ENCODE measurements at regions of chr17 and their contacts with region 1.

Region 1: GRCh38 chr17:3913531-3914311 is 2.5 kb downstream of the P2RX1 start:
- DNase-seq: peak; percentile 58 to 95
- H3K4me3 ChIP-seq: no peak overlapping the region
- H3K27ac ChIP-seq: no peak overlapping the region
- H3K4me1 ChIP-seq: peaks cover 0 to 1% (median 0%) of the 10 kb centered on the region in 4 experiments; a peak in 1 of 7 replicates
- H3K27me3 ChIP-seq: no peaks in the 10 kb centered on the region
- CTCF ChIP-seq: peak; percentile 97 to 99 (median 99)
- EP300 ChIP-seq: no peak
- POLR2A ChIP-seq: no peak
- RAD21 ChIP-seq: peak; percentile 93 to 94

Region 2: GRCh38 chr17:3845621-3846441 is 67.9 kb before region 1 on chr17 and contains the start of gene NCBP3:
- CTCF ChIA-PET with region 1: interaction called, 75 read pairs
- POLR2A ChIA-PET with region 1: no interaction called
- DNase-seq: peak; percentile 77 to 91
- H3K4me3 ChIP-seq: peak within 1 kb of the TSS; percentile 84 to 95 (median 90)
- H3K27ac ChIP-seq: peak within 1 kb of the TSS; percentile 91
- H3K4me1 ChIP-seq: 0 out of 7 replicates have a peak, but pooled peaks cover 0 to 3% (median 0%) of the 10 kb centered on the region in 4 experiments
- H3K27me3 ChIP-seq: no peaks in the 10 kb centered on the region
- CTCF ChIP-seq: peak; percentile 80 to 89 (median 86)
- EP300 ChIP-seq: peak in 1 of 2 experiments; percentile 88; a peak in 1 of 3 replicates
- POLR2A ChIP-seq: peak; percentile 86 to 94
- RAD21 ChIP-seq: peak in 1 of 2 experiments; percentile 24; a peak in 1 of 4 replicates
- total RNA-seq, gene NCBP3: 46.1 and 47.9 TPM in 2 replicates

Region 3: DNA sequence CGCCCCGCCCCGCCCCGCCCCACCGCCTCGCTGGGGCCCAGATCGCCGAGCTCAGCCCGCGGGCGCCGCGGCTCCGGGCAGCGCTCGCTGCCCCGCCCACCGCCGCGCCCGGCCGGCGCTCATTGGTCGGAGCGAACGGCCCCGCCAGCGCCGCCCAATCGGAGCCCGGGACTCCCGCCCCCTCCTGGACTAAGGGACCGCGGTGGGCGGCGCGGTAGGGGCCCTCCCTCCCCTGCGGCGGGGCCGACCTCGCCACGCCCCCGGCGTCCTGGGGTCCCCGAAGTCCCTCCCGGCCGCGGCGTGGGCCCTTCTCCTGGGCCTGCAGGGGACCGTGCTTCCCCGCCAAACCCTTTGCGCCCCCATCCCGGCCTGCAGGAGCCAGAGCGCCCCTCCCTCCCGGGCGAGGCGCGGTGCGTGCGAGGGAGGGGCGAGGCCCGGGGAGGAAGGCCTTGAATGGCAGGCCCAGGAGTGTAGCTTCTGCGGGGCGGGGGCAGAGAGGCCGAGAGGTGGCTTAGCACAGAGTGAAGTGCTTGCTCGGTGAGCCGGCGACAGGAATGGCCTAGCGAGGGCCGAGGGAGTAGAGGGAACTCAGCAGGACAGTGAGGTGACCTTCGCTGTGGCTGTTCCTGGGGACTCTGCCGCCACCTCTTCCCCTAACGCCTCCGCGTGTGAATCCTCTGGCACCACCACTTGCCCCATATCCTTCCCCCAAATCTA is 20.6 kb before region 1 on chr17 and contains the start of gene CAMKK1:
- CTCF ChIA-PET with region 1: interaction called, 15 read pairs
- POLR2A ChIA-PET with region 1: interaction called, 6 read pairs
- DNase-seq: peak; percentile 44 to 92
- H3K4me3 ChIP-seq: peak within 1 kb of the TSS; percentile 52 to 82 (median 63)
- H3K27ac ChIP-seq: no peak within 1 kb of the TSS; the same call in 1 of the 2 replicates
- H3K4me1 ChIP-seq: peaks cover 6 to 31% (median 21%) of the 10 kb centered on the region in 4 experiments
- H3K27me3 ChIP-seq: peaks cover 0 to 6% (median 1%) of the 10 kb centered on the region in 4 experiments; a peak in 3 of 7 replicates
- CTCF ChIP-seq: no peak
- EP300 ChIP-seq: no peak
- POLR2A ChIP-seq: peak in 1 of 2 experiments; percentile 67; a peak in 2 of 3 replicates
- RAD21 ChIP-seq: no peak
- total RNA-seq, gene CAMKK1: 7.6 and 8.5 TPM in 2 replicates

Region 4: GRCh38 chr17:3935140-3935542 is 21.4 kb after region 1 on chr17:
- CTCF ChIA-PET with region 1: interaction called, 25 read pairs
- POLR2A ChIA-PET with region 1: interaction called, 3 read pairs
- DNase-seq: peak; percentile 44 to 80
- H3K4me3 ChIP-seq: no peak overlapping the region
- H3K27ac ChIP-seq: no peak overlapping the region
- H3K4me1 ChIP-seq: no peaks in the 10 kb centered on the region
- H3K27me3 ChIP-seq: no peaks in the 10 kb centered on the region
- CTCF ChIP-seq: peak; percentile 92 to 94 (median 92)
- EP300 ChIP-seq: peak in 1 of 2 experiments; percentile 62; a peak in 1 of 3 replicates
- POLR2A ChIP-seq: no peak
- RAD21 ChIP-seq: peak; percentile 92 to 94

Region 5: DNA sequence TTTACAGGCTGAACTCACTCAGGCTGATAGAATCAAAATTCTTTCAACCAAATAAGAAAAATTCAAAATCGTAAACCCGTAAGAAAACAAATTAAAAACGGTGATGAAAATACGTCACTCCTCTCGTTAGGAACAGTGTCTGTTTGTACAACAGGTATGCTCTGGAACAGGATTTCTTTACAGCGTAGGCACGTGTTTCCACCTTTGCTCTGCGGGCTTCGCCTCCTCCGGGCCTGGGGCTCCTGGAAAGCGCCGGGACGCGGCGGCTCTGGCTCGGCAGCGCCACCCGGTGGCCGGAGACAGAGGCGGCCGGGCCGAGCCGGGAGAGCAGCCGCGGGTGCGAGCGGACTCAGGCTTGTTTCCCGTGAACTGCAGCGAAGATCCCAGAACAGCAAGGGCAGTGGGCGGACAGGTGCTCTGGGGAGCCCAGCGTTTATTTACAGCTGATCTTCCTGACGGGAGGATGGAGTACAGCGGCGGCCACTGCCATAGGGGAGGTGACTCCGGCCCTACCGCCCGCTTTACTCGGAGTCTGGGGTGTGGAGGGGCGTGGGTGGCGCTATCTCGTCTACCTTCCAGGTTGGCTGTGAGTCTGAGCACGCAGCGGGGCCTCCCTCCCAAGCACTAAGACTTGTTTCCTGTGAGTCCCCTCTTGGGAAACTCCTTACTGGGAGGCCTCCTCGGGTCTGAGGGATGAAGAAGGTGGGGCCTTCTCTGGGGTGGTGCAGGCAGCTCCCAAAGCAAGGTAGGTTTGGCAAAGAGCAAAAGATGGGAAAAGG is 91.0 kb after region 1 on chr17:
- CTCF ChIA-PET with region 1: interaction called, 96 read pairs
- POLR2A ChIA-PET with region 1: interaction called, 3 read pairs
- DNase-seq: peak in 1 of 2 experiments; percentile 88
- H3K4me3 ChIP-seq: no peak overlapping the region
- H3K27ac ChIP-seq: no peak overlapping the region
- H3K4me1 ChIP-seq: peaks cover 0 to 16% (median 9%) of the 10 kb centered on the region in 4 experiments; a peak in 6 of 7 replicates
- H3K27me3 ChIP-seq: no peaks in the 10 kb centered on the region
- CTCF ChIP-seq: peak; percentile 86 to 96 (median 89)
- EP300 ChIP-seq: no peak
- POLR2A ChIP-seq: no peak
- RAD21 ChIP-seq: peak; percentile 91 to 97

Measured in H1 (cell line).